Naive thymus-derived CD4-positive, alpha-beta T cell (primary cell): ENCODE measurements at regions of chr5 and their contacts with region 1.

Region 1: GRCh38 chr5:163408311-163408923 is 29.0 kb upstream of the CCNG1 start:
- DNase-seq: peak; percentile 35 to 65 (median 54)
- ATAC-seq: peak; percentile 91
- H3K4me3 ChIP-seq: no peak overlapping the region
- H3K4me3 Mint-ChIP-seq: peak overlapping the region in 7 of 10 donors; percentile 10 to 62 (median 49)
- H3K27ac ChIP-seq: no peak overlapping the region
- H3K27ac Mint-ChIP-seq: no peak overlapping the region
- H3K4me1 ChIP-seq: no peaks in the 10 kb centered on the region
- H3K4me1 Mint-ChIP-seq: peaks cover 0 to 8% (median 5%) of the 10 kb centered on the region in 7 donors
- H3K27me3 ChIP-seq: no peaks in the 10 kb centered on the region
- H3K27me3 Mint-ChIP-seq: peaks cover 2 to 10% (median 6%) of the 10 kb centered on the region in 5 donors

Region 2: GRCh38 chr5:163306421-163306820 is 102.0 kb before region 1 on chr5:
- CTCF ChIA-PET with region 1: interaction called, 3 read pairs
- POLR2A ChIA-PET with region 1: no interaction called
- intact Hi-C with region 1: loop called (anchors 1 to 2 kb)
- DNase-seq: no peak
- ATAC-seq: peak; percentile 37
- H3K4me3 ChIP-seq: no peak overlapping the region
- H3K4me3 Mint-ChIP-seq: no peak overlapping the region
- H3K27ac ChIP-seq: no peak overlapping the region
- H3K27ac Mint-ChIP-seq: no peak overlapping the region
- H3K4me1 ChIP-seq: no peaks in the 10 kb centered on the region
- H3K4me1 Mint-ChIP-seq: peaks cover 0 to 11% (median 0%) of the 10 kb centered on the region in 7 donors
- H3K27me3 ChIP-seq: no peaks in the 10 kb centered on the region
- H3K27me3 Mint-ChIP-seq: peaks cover 0 to 7% (median 4%) of the 10 kb centered on the region in 5 donors

Region 3: DNA sequence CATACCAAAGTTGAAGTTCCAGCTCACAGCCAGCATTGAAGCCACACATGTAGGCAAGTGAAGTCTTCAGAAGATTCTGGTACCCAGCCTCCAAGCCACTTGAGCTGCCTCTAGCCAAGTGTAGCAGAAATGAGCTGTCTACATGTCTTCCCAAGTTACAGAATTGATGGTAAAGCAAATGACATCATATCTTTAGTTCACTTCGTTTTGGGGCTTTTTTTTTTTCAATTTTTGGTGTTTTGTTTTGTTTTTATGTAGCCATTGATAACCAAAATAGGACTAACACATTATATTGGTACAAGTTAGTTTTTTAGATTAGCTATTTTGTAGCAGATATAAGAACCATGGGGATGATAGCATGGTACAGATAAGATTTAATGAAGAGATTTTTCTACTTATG is 13.3 kb after region 1 on chr5:
- CTCF ChIA-PET with region 1: no interaction called
- POLR2A ChIA-PET with region 1: no interaction called
- intact Hi-C with region 1: no loop called
- DNase-seq: no peak
- ATAC-seq: no peak
- H3K4me3 ChIP-seq: no peak overlapping the region
- H3K4me3 Mint-ChIP-seq: no peak overlapping the region
- H3K27ac ChIP-seq: no peak overlapping the region
- H3K27ac Mint-ChIP-seq: no peak overlapping the region
- H3K4me1 ChIP-seq: no peaks in the 10 kb centered on the region
- H3K4me1 Mint-ChIP-seq: peaks cover 4 to 8% (median 8%) of the 10 kb centered on the region in 7 donors
- H3K27me3 ChIP-seq: no peaks in the 10 kb centered on the region
- H3K27me3 Mint-ChIP-seq: peaks cover 4 to 17% (median 12%) of the 10 kb centered on the region in 5 donors

Region 4: GRCh38 chr5:163437309-163438182 is 29.1 kb after region 1 on chr5 and contains the start of gene CCNG1:
- CTCF ChIA-PET with region 1: interaction called, 3 read pairs
- POLR2A ChIA-PET with region 1: no interaction called
- intact Hi-C with region 1: loop called in 1 of 2 experiments (anchors 1 kb)
- DNase-seq: peak; percentile 68 to 87 (median 84)
- ATAC-seq: peak; percentile 98
- H3K4me3 ChIP-seq: peak within 1 kb of the TSS; percentile 84
- H3K4me3 Mint-ChIP-seq: peak within 1 kb of the TSS; percentile 86 to 97 (median 95)
- H3K27ac ChIP-seq: peak within 1 kb of the TSS; percentile 96
- H3K27ac Mint-ChIP-seq: peak within 1 kb of the TSS; percentile 79 to 99 (median 93)
- H3K4me1 ChIP-seq: peaks cover 24 to 28% of the 10 kb centered on the region in 2 donors
- H3K4me1 Mint-ChIP-seq: peaks cover 20 to 55% (median 51%) of the 10 kb centered on the region in 7 donors
- H3K27me3 ChIP-seq: peaks cover 0 to 5% of the 10 kb centered on the region in 2 donors
- H3K27me3 Mint-ChIP-seq: peaks cover 0 to 13% (median 4%) of the 10 kb centered on the region in 5 donors
- total RNA-seq, gene CCNG1: 86.0 to 150 (median 116) TPM

Region 5: GRCh38 chr5:163760498-163760897 is 352.1 kb after region 1 on chr5:
- CTCF ChIA-PET with region 1: no interaction called
- POLR2A ChIA-PET with region 1: no interaction called
- intact Hi-C with region 1: no loop called
- DNase-seq: no peak
- ATAC-seq: no peak
- H3K4me3 ChIP-seq: no peak overlapping the region
- H3K4me3 Mint-ChIP-seq: no peak overlapping the region
- H3K27ac ChIP-seq: no peak overlapping the region
- H3K27ac Mint-ChIP-seq: no peak overlapping the region
- H3K4me1 ChIP-seq: no peaks in the 10 kb centered on the region
- H3K4me1 Mint-ChIP-seq: peaks cover 0 to 5% (median 0%) of the 10 kb centered on the region in 7 donors
- H3K27me3 ChIP-seq: no peaks in the 10 kb centered on the region
- H3K27me3 Mint-ChIP-seq: peaks cover 0 to 4% (median 0%) of the 10 kb centered on the region in 5 donors